Ovary (tissue), 10 donors: ENCODE measurements at regions of chr5 and their contacts with region 1.

Region 1: GRCh38 chr5:6765612-6766525 is 52.6 kb downstream of the TENT4A start:
- DNase-seq: peak; percentile 67 to 85 (median 83)
- H3K4me3 ChIP-seq: no peak overlapping the region
- H3K27ac ChIP-seq: no peak overlapping the region
- H3K4me1 ChIP-seq: peaks cover 1% of the 10 kb centered on the region
- H3K27me3 ChIP-seq: no peaks in the 10 kb centered on the region
- CTCF ChIP-seq: peak; percentile 72 to 80 (median 77)
- EP300 ChIP-seq: no peak
- POLR2A ChIP-seq: no peak

Region 2: GRCh38 chr5:6820851-6821479 is 55.1 kb after region 1 on chr5:
- intact Hi-C with region 1: loop called in 2 of 4 experiments (anchors 5 to 10 kb)
- DNase-seq: no peak
- H3K4me3 ChIP-seq: no peak overlapping the region
- H3K27ac ChIP-seq: no peak overlapping the region
- H3K4me1 ChIP-seq: no peaks in the 10 kb centered on the region
- H3K27me3 ChIP-seq: no peaks in the 10 kb centered on the region
- CTCF ChIP-seq: peak in 1 of 3 donors; percentile 15
- EP300 ChIP-seq: no peak
- POLR2A ChIP-seq: no peak

Region 3: DNA sequence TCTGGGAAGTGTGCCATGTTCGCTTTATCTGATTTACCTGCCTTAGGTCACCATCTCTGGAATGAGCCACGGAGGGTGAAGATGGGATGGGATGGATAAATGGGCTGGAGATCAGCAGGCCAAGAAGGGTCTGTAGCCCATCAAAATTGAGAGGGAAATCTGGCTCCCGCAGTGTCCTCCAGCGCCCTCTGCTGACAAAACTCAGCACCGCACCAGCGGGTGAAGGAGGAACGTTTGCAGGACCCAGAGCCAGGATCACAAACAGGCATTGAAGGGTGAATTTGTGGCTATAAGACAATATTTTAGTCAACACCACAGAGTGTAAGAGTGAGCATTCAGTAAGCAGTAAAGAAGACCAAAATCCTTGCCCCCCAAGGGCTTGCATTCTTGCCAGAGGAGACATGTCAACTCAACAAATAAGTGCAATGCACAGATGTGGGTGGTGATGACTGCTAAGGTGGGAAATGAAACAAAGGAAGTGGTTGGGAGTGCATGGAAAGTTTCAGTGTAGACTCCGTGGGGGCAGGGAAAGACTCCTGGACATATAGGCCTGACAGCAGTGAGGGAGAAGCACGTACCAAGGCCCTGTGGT is 71.7 kb after region 1 on chr5:
- intact Hi-C with region 1: loop called in 1 of 4 experiments (anchors 5 kb)
- DNase-seq: peak in 4 of 5 donors; percentile 20 to 57 (median 31)
- H3K4me3 ChIP-seq: no peak overlapping the region
- H3K27ac ChIP-seq: no peak overlapping the region
- H3K4me1 ChIP-seq: no peaks in the 10 kb centered on the region
- H3K27me3 ChIP-seq: no peaks in the 10 kb centered on the region
- CTCF ChIP-seq: peak in 1 of 3 donors; percentile 23
- EP300 ChIP-seq: no peak
- POLR2A ChIP-seq: no peak

Region 4: DNA sequence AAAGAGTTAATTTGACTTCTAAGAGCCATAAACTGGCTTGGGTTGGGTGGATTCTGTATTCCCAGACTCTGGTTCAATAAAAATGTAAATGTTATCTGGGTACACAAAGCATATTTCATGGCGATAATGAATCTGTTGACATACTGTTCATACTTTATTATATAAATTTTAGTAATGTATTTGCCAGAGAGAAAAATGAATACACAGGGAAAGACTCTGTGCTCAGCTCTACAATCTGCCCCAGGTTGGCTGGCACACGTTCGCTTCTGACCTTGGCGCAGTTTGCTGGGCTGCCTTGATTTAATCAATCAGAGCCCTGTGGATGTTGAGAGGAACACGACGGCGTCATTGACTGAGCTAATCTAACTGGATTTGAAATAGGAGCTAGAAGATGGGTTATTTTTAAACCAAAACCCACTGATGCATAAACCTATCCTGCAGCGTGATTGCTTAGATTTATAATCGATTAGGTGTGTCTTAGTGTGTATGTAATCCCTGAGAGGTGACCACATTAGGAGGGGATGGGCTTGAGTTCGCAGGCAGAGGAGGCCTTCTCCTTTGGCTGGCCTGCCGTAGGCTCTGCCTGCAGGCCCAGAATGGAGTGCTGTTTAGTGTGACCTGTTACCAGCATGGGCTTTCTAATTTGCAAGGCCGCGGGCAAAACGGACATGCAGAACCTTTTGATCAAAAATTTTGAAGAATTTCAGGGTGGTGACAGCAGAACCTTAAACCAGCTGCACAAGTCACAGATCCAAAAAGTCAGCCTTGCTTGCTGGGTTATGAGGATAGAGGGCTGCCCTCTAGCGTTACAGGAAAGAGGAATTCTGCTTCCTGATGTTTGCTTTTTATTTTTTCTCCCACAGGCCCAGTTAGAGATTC is 626.2 kb after region 1 on chr5:
- intact Hi-C with region 1: loop called in 2 of 4 experiments (anchors 5 to 10 kb)
- DNase-seq: peak in 2 of 5 donors; percentile 19 to 33
- H3K4me3 ChIP-seq: no peak overlapping the region
- H3K27ac ChIP-seq: no peak overlapping the region
- H3K4me1 ChIP-seq: no peaks in the 10 kb centered on the region
- H3K27me3 ChIP-seq: no peaks in the 10 kb centered on the region
- CTCF ChIP-seq: peak; percentile 13 to 20 (median 18)
- EP300 ChIP-seq: no peak
- POLR2A ChIP-seq: no peak

Region 5: DNA sequence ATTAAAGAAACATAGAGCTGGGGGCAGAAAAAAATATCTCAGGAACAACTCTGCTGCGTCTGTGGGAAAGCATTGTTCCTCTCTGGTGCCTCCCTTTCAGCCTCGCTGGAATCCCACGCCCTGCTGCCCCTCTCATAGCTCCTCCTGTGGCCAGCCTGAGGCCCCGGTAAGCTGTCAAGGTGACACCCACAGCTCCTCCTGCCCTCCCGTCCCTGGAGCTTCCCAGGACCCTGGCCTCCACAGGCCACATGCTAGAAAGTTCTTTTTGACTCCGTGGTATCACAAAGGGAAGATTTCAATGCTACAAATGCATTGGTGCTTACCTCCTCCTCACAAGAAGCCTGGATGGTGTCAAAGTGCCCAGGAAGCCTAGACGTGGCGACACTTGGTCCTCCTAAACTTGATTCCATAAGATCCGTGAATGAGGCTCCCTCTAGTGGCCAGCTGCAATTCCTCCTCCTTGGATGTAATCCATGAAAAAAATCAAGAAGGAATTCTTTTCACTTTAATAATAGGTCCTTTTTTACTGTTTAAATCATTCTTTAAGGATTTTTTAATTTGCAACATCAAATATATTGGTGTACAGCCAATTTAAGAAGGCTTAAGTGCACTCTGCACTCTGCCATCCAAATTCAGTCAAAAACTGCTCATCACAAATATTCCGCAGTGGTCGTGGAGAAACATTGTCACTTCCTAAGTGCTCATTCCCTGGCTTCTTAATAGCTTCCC is 980.2 kb after region 1 on chr5:
- intact Hi-C with region 1: loop called in 2 of 4 experiments (anchors 5 to 10 kb)
- DNase-seq: peak; percentile 60 to 79 (median 71)
- H3K4me3 ChIP-seq: no peak overlapping the region
- H3K27ac ChIP-seq: no peak overlapping the region
- H3K4me1 ChIP-seq: no peaks in the 10 kb centered on the region
- H3K27me3 ChIP-seq: no peaks in the 10 kb centered on the region
- CTCF ChIP-seq: peak; percentile 45 to 72 (median 58)
- EP300 ChIP-seq: no peak
- POLR2A ChIP-seq: no peak

Region 6: DNA sequence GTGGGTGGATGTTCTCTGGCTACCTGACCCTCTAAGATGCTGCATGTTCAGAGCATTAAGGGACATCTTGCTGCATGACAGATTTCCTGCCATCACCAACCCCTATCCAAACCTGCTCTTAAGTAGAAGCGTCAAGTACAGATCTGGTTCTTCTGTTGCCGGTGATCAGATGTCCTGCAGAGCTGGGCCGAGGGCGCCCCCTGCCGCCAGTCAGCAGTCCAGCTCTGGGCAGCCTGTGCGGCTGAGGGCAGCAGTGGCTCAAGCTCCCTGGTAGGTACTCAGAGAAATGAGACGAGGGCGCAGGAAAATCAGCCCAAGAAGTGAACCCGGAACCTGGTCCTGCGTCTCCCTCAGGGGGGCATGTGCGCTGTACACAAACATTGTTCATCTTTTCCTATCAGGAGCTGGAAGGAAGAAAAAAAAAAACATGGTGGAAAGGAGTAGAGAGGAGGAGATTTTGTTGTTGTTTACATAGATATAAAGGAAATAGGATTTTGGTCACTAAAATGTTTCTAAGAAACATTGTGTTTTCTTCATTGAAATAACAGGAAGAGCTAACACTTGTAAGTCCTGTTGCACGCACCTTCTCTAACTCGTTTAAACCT is 989.2 kb after region 1 on chr5:
- intact Hi-C with region 1: loop called in 1 of 4 experiments (anchors 10 kb)
- DNase-seq: peak; percentile 28 to 71 (median 62)
- H3K4me3 ChIP-seq: no peak overlapping the region
- H3K27ac ChIP-seq: no peak overlapping the region
- H3K4me1 ChIP-seq: no peaks in the 10 kb centered on the region
- H3K27me3 ChIP-seq: no peaks in the 10 kb centered on the region
- CTCF ChIP-seq: peak; percentile 27 to 47 (median 41)
- EP300 ChIP-seq: no peak
- POLR2A ChIP-seq: no peak